ENCODE measurements at regions of chr4 and their contacts with region 1.

Region 1: DNA sequence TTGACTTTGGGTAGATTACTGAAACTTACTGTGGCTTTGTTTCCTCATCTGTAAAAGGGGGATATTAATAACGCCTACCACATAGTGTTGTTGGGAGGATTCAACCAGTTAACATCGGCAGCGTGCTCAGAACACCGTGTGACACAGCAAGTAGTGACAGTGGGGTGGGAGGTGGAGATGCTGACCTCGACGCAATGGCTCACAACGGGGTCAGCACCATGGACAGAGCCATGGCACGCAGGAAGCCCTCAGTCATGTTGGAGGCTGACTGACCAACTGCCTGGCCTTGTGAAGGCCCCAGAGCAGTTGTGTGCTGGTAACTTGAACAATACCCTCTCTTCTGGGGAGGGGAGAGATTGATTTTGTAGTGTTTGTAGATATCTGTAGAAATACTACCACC is 93.2 kb downstream of the WFS1 start:
- DNase-seq: peak in 1 of 2 experiments; percentile 87
- H3K4me3 ChIP-seq: no peak overlapping the region
- H3K27ac ChIP-seq: no peak overlapping the region
- H3K4me1 ChIP-seq: peaks cover 3 to 7% (median 5%) of the 10 kb centered on the region in 4 experiments; a peak in 5 of 7 replicates
- H3K27me3 ChIP-seq: 0 out of 7 replicates have a peak, but pooled peaks cover 0 to 2% (median 0%) of the 10 kb centered on the region in 4 experiments
- CTCF ChIP-seq: no peak
- EP300 ChIP-seq: no peak
- POLR2A ChIP-seq: no peak
- RAD21 ChIP-seq: no peak

Region 2: GRCh38 chr4:6343950-6344408 is 18.9 kb before region 1 on chr4:
- CTCF ChIA-PET with region 1: interaction called, 21 read pairs
- POLR2A ChIA-PET with region 1: interaction called, 3 read pairs
- DNase-seq: no peak
- H3K4me3 ChIP-seq: no peak overlapping the region
- H3K27ac ChIP-seq: no peak overlapping the region
- H3K4me1 ChIP-seq: peaks cover 0 to 11% (median 3%) of the 10 kb centered on the region in 4 experiments; a peak in 3 of 7 replicates
- H3K27me3 ChIP-seq: no peaks in the 10 kb centered on the region
- CTCF ChIP-seq: peak in 2 of 3 experiments; percentile 43 to 48; a peak in 3 of 4 replicates
- EP300 ChIP-seq: no peak
- POLR2A ChIP-seq: no peak
- RAD21 ChIP-seq: peak; percentile 58 to 67

Region 3: GRCh38 chr4:6349896-6350603 is 12.8 kb before region 1 on chr4:
- CTCF ChIA-PET with region 1: interaction called, 21 read pairs
- POLR2A ChIA-PET with region 1: no interaction called
- DNase-seq: no peak
- H3K4me3 ChIP-seq: no peak overlapping the region
- H3K27ac ChIP-seq: no peak overlapping the region
- H3K4me1 ChIP-seq: peaks cover 0 to 3% (median 2%) of the 10 kb centered on the region in 4 experiments; a peak in 2 of 7 replicates
- H3K27me3 ChIP-seq: no peaks in the 10 kb centered on the region
- CTCF ChIP-seq: no peak
- EP300 ChIP-seq: no peak
- POLR2A ChIP-seq: no peak
- RAD21 ChIP-seq: no peak